HCT116 (cell line): ENCODE measurements at regions of chr14 and their contacts with region 1.

Region 1: GRCh38 chr14:36553656-36554260 is 28.7 kb downstream of the NKX2-8 start:
- DNase-seq: peak; percentile 41
- ATAC-seq: peak; percentile 89
- H3K4me3 ChIP-seq: no peak overlapping the region
- H3K27ac ChIP-seq: no peak overlapping the region
- H3K4me1 ChIP-seq: no peaks in the 10 kb centered on the region
- H3K27me3 ChIP-seq: no peaks in the 10 kb centered on the region
- CTCF ChIP-seq: peak; percentile 67 to 72 (median 72); a peak in 5 of 6 replicates
- POLR2A ChIP-seq: no peak
- RAD21 ChIP-seq: peak; percentile 67

Region 2: GRCh38 chr14:36105401-36105800 is 448.4 kb before region 1 on chr14:
- CTCF ChIA-PET with region 1: interaction called, 27 read pairs
- POLR2A ChIA-PET with region 1: no interaction called
- RAD21 ChIA-PET with region 1: interaction called in 1 of 2 experiments, 3 read pairs
- intact Hi-C with region 1: no loop called
- DNase-seq: peak; percentile 40
- ATAC-seq: peak; percentile 87
- H3K4me3 ChIP-seq: no peak overlapping the region
- H3K27ac ChIP-seq: no peak overlapping the region
- H3K4me1 ChIP-seq: no peaks in the 10 kb centered on the region
- H3K27me3 ChIP-seq: peaks cover 4% of the 10 kb centered on the region; the same call in 1 of the 2 replicates
- CTCF ChIP-seq: peak; percentile 43 to 60 (median 46); a peak in 4 of 6 replicates
- POLR2A ChIP-seq: no peak
- RAD21 ChIP-seq: peak; percentile 72

Region 3: GRCh38 chr14:36467332-36467731 is 86.4 kb before region 1 on chr14:
- CTCF ChIA-PET with region 1: no interaction called
- POLR2A ChIA-PET with region 1: no interaction called
- RAD21 ChIA-PET with region 1: no interaction called
- intact Hi-C with region 1: no loop called
- DNase-seq: no peak
- ATAC-seq: no peak
- H3K4me3 ChIP-seq: no peak overlapping the region
- H3K27ac ChIP-seq: no peak overlapping the region
- H3K4me1 ChIP-seq: no peaks in the 10 kb centered on the region
- H3K27me3 ChIP-seq: no peaks in the 10 kb centered on the region
- CTCF ChIP-seq: no peak
- POLR2A ChIP-seq: no peak
- RAD21 ChIP-seq: no peak

Region 4: GRCh38 chr14:36524874-36525745 is 28.6 kb before region 1 on chr14:
- CTCF ChIA-PET with region 1: interaction called, 27 read pairs
- POLR2A ChIA-PET with region 1: no interaction called
- RAD21 ChIA-PET with region 1: no interaction called
- intact Hi-C with region 1: no loop called
- DNase-seq: peak; percentile 65
- ATAC-seq: peak; percentile 88
- H3K4me3 ChIP-seq: peak overlapping the region; percentile 39 to 56
- H3K27ac ChIP-seq: no peak overlapping the region
- H3K4me1 ChIP-seq: peaks cover 0 to 21% of the 10 kb centered on the region in 2 experiments; a peak in 2 of 4 replicates
- H3K27me3 ChIP-seq: peaks cover 4% of the 10 kb centered on the region; the same call in 1 of the 2 replicates
- CTCF ChIP-seq: peak; percentile 59 to 84 (median 79); a peak in 5 of 6 replicates
- POLR2A ChIP-seq: no peak
- RAD21 ChIP-seq: peak; percentile 56

Region 5: GRCh38 chr14:36604757-36605505 is 51.2 kb after region 1 on chr14:
- CTCF ChIA-PET with region 1: interaction called, 46 read pairs
- POLR2A ChIA-PET with region 1: no interaction called
- RAD21 ChIA-PET with region 1: interaction called, 5 to 9 read pairs
- intact Hi-C with region 1: loop called (anchors 1 kb)
- DNase-seq: peak; percentile 76
- ATAC-seq: peak; percentile 94
- H3K4me3 ChIP-seq: no peak overlapping the region
- H3K27ac ChIP-seq: no peak overlapping the region
- H3K4me1 ChIP-seq: peaks cover 0 to 9% of the 10 kb centered on the region in 2 experiments; a peak in 2 of 4 replicates
- H3K27me3 ChIP-seq: no peaks in the 10 kb centered on the region
- CTCF ChIP-seq: peak; percentile 77 to 83 (median 80)
- POLR2A ChIP-seq: no peak
- RAD21 ChIP-seq: peak; percentile 82

Region 6: GRCh38 chr14:36941783-36942521 is 388.2 kb after region 1 on chr14:
- CTCF ChIA-PET with region 1: interaction called, 41 read pairs
- POLR2A ChIA-PET with region 1: no interaction called
- RAD21 ChIA-PET with region 1: interaction called in 1 of 2 experiments, 10 read pairs
- intact Hi-C with region 1: loop called (anchors 1 kb)
- DNase-seq: peak; percentile 60
- ATAC-seq: peak; percentile 93
- H3K4me3 ChIP-seq: no peak overlapping the region; a peak in 1 of 4 replicates
- H3K27ac ChIP-seq: no peak overlapping the region
- H3K4me1 ChIP-seq: peaks cover 0 to 4% of the 10 kb centered on the region in 2 experiments; a peak in 1 of 4 replicates
- H3K27me3 ChIP-seq: no peaks in the 10 kb centered on the region
- CTCF ChIP-seq: peak; percentile 84 to 97 (median 96)
- POLR2A ChIP-seq: no peak
- RAD21 ChIP-seq: peak; percentile 82

Region 7: GRCh38 chr14:37150414-37150813 is 596.7 kb after region 1 on chr14:
- CTCF ChIA-PET with region 1: interaction called, 46 read pairs
- POLR2A ChIA-PET with region 1: no interaction called
- RAD21 ChIA-PET with region 1: interaction called in 1 of 2 experiments, 4 read pairs
- intact Hi-C with region 1: loop called (anchors 2 kb)
- DNase-seq: no peak
- ATAC-seq: peak; percentile 91
- H3K4me3 ChIP-seq: no peak overlapping the region
- H3K27ac ChIP-seq: no peak overlapping the region
- H3K4me1 ChIP-seq: peaks cover 0 to 3% of the 10 kb centered on the region in 2 experiments; a peak in 1 of 4 replicates
- H3K27me3 ChIP-seq: no peaks in the 10 kb centered on the region
- CTCF ChIP-seq: peak; percentile 62 to 89 (median 69); a peak in 5 of 6 replicates
- POLR2A ChIP-seq: no peak
- RAD21 ChIP-seq: peak; percentile 68